CD8-positive, alpha-beta T cell (primary cell): ENCODE measurements at regions of chr1 and their contacts with region 1.

Region 1: DNA sequence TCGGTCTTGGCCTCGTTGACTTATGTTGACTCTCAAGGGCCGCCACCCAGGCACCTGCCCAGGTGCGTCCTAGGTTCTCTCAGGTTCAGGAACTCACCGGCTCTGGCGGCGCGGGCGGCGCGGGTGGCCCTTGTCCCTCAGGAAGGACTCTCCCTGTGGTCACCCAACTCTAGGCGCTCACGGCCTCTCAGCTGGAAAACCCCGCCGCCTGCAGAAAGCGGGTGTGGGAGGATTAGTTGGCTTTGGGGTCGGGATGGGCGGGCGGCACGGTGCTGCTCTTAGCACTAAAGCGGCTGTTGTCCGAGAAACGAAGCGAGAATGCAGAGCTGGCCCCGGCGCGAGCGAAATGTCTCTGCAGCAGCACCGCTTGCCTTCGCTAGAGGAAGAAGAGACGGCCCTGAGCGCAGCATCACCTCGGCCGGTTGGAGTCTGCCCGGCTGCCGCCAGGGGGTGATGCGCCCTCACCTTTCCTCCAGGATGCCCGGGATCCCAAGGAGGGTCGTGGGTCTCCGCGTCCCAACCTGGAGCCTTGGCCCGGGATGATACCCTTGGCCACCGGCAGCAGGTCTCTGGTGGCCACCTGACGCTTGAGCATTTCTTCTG is 8.1 kb upstream of the TADA1 start:
- DNase-seq: peak in 6 of 9 experiments; percentile 25 to 54 (median 38)
- ATAC-seq: peak; percentile 72
- H3K4me3 ChIP-seq: no peak overlapping the region
- H3K4me3 Mint-ChIP-seq: no peak overlapping the region
- H3K27ac ChIP-seq: no peak overlapping the region
- H3K27ac Mint-ChIP-seq: no peak overlapping the region
- H3K4me1 ChIP-seq: peaks cover 6% of the 10 kb centered on the region
- H3K4me1 Mint-ChIP-seq: peaks cover 16% of the 10 kb centered on the region
- H3K27me3 ChIP-seq: peaks cover 0 to 7% of the 10 kb centered on the region in 2 experiments
- H3K27me3 Mint-ChIP-seq: peaks cover 21% of the 10 kb centered on the region
- CTCF ChIP-seq: peak; percentile 50

Region 2: DNA sequence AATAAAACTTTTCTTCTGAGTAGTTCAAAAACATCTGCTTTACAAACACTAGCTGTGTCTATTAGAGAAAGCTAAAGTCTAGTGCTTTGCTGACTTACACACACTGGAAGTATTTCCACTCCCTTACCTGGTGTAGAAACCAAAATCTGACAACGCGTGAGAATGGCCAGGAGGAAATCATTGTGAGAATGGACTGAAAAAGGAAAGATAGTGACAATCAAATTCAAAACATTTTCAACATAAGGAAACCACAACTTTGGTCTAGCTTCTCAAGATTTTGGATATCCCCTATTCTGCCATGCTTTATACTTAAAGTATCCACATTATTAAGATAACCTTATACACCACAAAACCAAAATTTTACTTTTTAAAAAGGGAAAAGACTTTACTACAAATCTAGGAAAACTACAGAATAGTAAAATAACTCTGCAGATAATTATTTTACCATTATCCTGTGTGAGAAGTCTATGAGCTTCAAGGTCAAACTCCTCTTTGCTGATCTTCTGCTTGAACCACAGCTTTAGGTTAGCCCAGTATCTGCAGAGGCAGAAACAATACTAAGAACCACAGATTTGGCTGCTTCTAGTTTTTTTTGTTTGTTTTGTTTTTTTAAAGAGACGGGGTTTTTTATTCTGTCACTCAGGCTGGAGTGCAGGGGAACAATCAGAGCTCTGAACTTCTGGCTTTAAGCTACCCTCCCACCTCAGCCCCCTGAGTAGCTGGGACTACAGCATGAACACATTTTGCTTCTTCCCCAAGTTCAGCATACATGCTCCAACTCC is 14.6 kb before region 1 on chr1:
- CTCF ChIA-PET with region 1: interaction called, 3 read pairs
- POLR2A ChIA-PET with region 1: no interaction called
- intact Hi-C with region 1: loop called in 1 of 2 experiments (anchors 1 kb)
- DNase-seq: no peak
- ATAC-seq: no peak
- H3K4me3 ChIP-seq: no peak overlapping the region
- H3K4me3 Mint-ChIP-seq: no peak overlapping the region
- H3K27ac ChIP-seq: no peak overlapping the region
- H3K27ac Mint-ChIP-seq: peak overlapping the region; percentile 49
- H3K4me1 ChIP-seq: peaks cover 10% of the 10 kb centered on the region
- H3K4me1 Mint-ChIP-seq: peaks cover 46% of the 10 kb centered on the region
- H3K27me3 ChIP-seq: no peaks in the 10 kb centered on the region
- H3K27me3 Mint-ChIP-seq: no peaks in the 10 kb centered on the region
- CTCF ChIP-seq: no peak